Activated CD4-positive, alpha-beta T cell treated with anti-CD3 and anti-CD28 coated beads, Interleukin-2, amount 10 ng/mL, durations not matched to agents 24 days and 14 days (primary cell): ENCODE measurements at regions of chr1 and their contacts with region 1.

Region 1: GRCh38 chr1:173824331-173825081 is at the starts of genes CENPL and DARS2:
- DNase-seq: peak; percentile 97
- H3K4me3 Mint-ChIP-seq: peak within 1 kb of the TSS; percentile 99
- H3K27ac Mint-ChIP-seq: peak within 1 kb of the TSS; percentile 98
- H3K4me1 Mint-ChIP-seq: peaks cover 49% of the 10 kb centered on the region
- H3K27me3 Mint-ChIP-seq: no peaks in the 10 kb centered on the region
- total RNA-seq, gene CENPL: 23.2 and 24.4 TPM in 2 replicates
- total RNA-seq, gene DARS2: 47.6 and 52.2 TPM in 2 replicates

Region 2: DNA sequence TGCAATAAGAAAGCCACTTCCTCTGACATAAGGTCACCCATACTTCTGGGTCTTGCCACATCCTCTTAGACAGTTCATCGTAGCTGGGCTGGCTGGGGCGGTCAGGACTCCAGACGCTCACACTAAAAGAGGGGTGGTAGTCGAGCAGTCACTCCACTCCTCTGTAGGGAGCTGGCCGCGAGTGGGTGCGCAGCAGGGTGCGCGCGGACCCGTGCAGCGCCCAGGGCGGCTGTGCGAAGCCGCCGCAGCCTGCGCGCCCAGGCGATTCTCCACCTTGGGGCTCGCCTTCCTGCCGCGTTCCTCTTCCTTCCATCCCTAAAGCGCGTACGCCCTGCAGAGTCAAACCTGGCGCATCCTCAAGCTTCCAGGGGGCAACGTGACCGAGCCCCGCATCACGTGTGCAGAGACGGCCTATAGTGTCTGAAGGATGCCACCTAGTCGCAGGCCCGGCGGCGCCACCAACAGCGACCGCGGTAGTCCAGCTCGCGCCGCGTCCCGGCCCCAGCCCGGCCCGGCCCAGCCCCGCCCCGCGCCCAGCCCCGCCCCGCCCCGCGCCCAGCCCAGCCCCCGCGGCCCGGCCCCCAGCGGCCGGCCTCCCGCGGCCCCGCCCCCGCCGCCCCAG is 347.7 kb before region 1 on chr1:
- intact Hi-C with region 1: loop called (anchors 1 kb)
- DNase-seq: peak; percentile 92
- H3K4me3 Mint-ChIP-seq: peak overlapping the region; percentile 92
- H3K27ac Mint-ChIP-seq: peak overlapping the region; percentile 96
- H3K4me1 Mint-ChIP-seq: peaks cover 48% of the 10 kb centered on the region
- H3K27me3 Mint-ChIP-seq: no peaks in the 10 kb centered on the region

Region 3: GRCh38 chr1:173758980-173759609 is 65.4 kb before region 1 on chr1:
- intact Hi-C with region 1: no loop called
- DNase-seq: no peak
- H3K4me3 Mint-ChIP-seq: no peak overlapping the region
- H3K27ac Mint-ChIP-seq: no peak overlapping the region
- H3K4me1 Mint-ChIP-seq: peaks cover 3% of the 10 kb centered on the region
- H3K27me3 Mint-ChIP-seq: no peaks in the 10 kb centered on the region

Region 4: GRCh38 chr1:173798078-173798477 is 26.4 kb before region 1 on chr1:
- intact Hi-C with region 1: no loop called
- DNase-seq: no peak
- H3K4me3 Mint-ChIP-seq: no peak overlapping the region
- H3K27ac Mint-ChIP-seq: no peak overlapping the region
- H3K4me1 Mint-ChIP-seq: no peaks in the 10 kb centered on the region
- H3K27me3 Mint-ChIP-seq: no peaks in the 10 kb centered on the region

Region 5: DNA sequence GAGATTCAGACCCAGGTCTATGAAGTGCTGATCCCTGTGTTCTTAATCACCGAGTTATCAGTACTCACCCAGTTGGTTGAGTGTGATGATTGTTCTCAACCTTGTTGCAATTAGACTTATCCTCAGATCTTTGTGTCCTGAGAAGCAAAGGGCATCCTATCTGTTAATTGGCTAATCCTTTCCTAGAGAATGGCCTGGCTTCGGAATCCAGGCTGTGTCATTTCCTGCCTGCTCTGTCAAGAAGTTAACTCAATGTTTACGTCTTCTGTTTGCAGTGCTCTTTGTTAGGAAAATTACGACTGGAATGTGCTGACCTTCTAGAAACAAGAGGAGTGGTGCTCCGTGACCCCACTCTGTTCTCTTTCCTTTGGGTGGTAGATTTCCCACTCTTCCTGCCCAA is 28.6 kb after region 1 on chr1:
- intact Hi-C with region 1: no loop called
- DNase-seq: no peak
- H3K4me3 Mint-ChIP-seq: no peak overlapping the region
- H3K27ac Mint-ChIP-seq: no peak overlapping the region
- H3K4me1 Mint-ChIP-seq: peaks cover 5% of the 10 kb centered on the region
- H3K27me3 Mint-ChIP-seq: no peaks in the 10 kb centered on the region

Region 6: GRCh38 chr1:173946380-173946921 is 121.9 kb after region 1 on chr1:
- intact Hi-C with region 1: no loop called
- DNase-seq: no peak
- H3K4me3 Mint-ChIP-seq: no peak overlapping the region
- H3K27ac Mint-ChIP-seq: no peak overlapping the region
- H3K4me1 Mint-ChIP-seq: no peaks in the 10 kb centered on the region
- H3K27me3 Mint-ChIP-seq: no peaks in the 10 kb centered on the region